Activated B cell treated with CpG ODN at 0.5 μM for 24 hours (primary cell): ENCODE measurements at regions of chr19 and their contacts with region 1.

Region 1: GRCh38 chr19:6110360-6110977 is at the start of gene RFX2:
- DNase-seq: peak; percentile 99
- ATAC-seq: peak; percentile 98
- H3K4me3 Mint-ChIP-seq: peak within 1 kb of the TSS; percentile 87
- H3K27ac Mint-ChIP-seq: peak within 1 kb of the TSS; percentile 77
- H3K4me1 Mint-ChIP-seq: peaks cover 22% of the 10 kb centered on the region
- H3K27me3 Mint-ChIP-seq: peaks cover 12% of the 10 kb centered on the region
- CTCF ChIP-seq: no peak
- total RNA-seq, gene RFX2: 5.2 and 7.0 TPM in 2 replicates

Region 2: DNA sequence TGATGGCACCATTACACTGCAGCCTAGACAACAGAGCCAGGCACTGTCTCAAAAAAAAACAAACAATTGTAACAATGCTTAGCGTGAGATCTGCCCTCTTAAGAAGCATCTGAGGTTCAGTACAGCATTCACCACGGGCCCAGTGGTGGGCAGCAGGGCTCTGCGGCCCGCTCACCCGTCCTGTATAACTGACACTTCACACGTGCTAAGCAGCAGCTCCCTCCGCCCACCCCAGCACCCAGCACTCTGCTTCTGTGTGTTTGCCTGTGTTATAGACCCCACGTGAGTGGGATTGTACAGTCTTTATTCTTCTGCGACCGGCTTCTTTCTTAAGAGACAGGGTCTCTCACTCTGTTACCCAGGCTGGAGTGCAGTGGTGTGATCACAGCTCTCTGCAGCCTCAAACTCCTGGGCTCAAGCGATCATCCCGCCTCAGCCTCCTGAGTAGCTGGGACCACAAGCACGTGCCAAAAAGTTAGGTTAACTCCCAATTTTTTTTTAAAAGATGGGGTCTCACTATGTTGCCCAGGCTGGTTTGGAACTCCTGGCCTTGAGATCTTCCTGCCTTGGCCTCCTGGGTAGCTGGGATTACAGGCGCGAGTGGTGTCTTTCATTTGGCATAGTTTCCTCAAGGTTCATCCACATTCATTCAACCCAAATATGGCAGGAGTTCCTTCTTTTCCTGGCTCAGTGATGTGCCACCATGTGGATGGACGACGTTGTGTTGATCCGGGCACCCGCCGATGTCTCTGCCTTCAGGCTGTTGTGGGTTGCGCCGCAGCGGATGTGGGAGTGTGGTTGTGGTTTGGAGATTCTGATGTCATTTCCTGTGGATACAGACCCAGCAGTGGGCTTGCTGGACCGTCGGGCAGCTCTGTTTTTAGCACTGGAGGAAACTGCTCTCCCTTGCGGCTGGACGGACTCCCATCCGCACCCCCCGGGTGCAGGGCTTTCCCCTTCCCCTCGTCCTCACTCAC is 971.6 kb before region 1 on chr19:
- CTCF ChIA-PET with region 1: no interaction called
- POLR2A ChIA-PET with region 1: no interaction called
- intact Hi-C with region 1: loop called (anchors 10 kb)
- DNase-seq: peak; percentile 73
- ATAC-seq: peak; percentile 64
- H3K4me3 Mint-ChIP-seq: peak overlapping the region; percentile 70
- H3K27ac Mint-ChIP-seq: peak overlapping the region; percentile 85
- H3K4me1 Mint-ChIP-seq: peaks cover 86% of the 10 kb centered on the region
- H3K27me3 Mint-ChIP-seq: no peaks in the 10 kb centered on the region
- CTCF ChIP-seq: no peak

Region 3: GRCh38 chr19:5977785-5978605 is 132.5 kb before region 1 on chr19 and contains the start of gene RANBP3:
- CTCF ChIA-PET with region 1: no interaction called
- POLR2A ChIA-PET with region 1: no interaction called
- intact Hi-C with region 1: loop called (anchors 1 kb)
- DNase-seq: peak; percentile 97
- ATAC-seq: peak; percentile 91
- H3K4me3 Mint-ChIP-seq: peak within 1 kb of the TSS; percentile 91
- H3K27ac Mint-ChIP-seq: peak within 1 kb of the TSS; percentile 83
- H3K4me1 Mint-ChIP-seq: peaks cover 52% of the 10 kb centered on the region
- H3K27me3 Mint-ChIP-seq: no peaks in the 10 kb centered on the region
- CTCF ChIP-seq: no peak
- total RNA-seq, gene RANBP3: 77.0 and 98.5 TPM in 2 replicates

Region 4: GRCh38 chr19:5993648-5994358 is 116.7 kb before region 1 on chr19:
- CTCF ChIA-PET with region 1: no interaction called
- POLR2A ChIA-PET with region 1: interaction called, 4 read pairs
- intact Hi-C with region 1: loop called (anchors 5 kb)
- DNase-seq: no peak
- ATAC-seq: no peak
- H3K4me3 Mint-ChIP-seq: no peak overlapping the region
- H3K27ac Mint-ChIP-seq: peak overlapping the region; percentile 27
- H3K4me1 Mint-ChIP-seq: peaks cover 22% of the 10 kb centered on the region
- H3K27me3 Mint-ChIP-seq: no peaks in the 10 kb centered on the region
- CTCF ChIP-seq: no peak

Region 5: GRCh38 chr19:6076675-6077463 is 33.6 kb before region 1 on chr19:
- CTCF ChIA-PET with region 1: no interaction called
- POLR2A ChIA-PET with region 1: interaction called, 10 read pairs
- intact Hi-C with region 1: no loop called
- DNase-seq: no peak
- ATAC-seq: no peak
- H3K4me3 Mint-ChIP-seq: no peak overlapping the region
- H3K27ac Mint-ChIP-seq: no peak overlapping the region
- H3K4me1 Mint-ChIP-seq: peaks cover 8% of the 10 kb centered on the region
- H3K27me3 Mint-ChIP-seq: no peaks in the 10 kb centered on the region
- CTCF ChIP-seq: no peak

Region 6: GRCh38 chr19:6087074-6087571 is 23.3 kb before region 1 on chr19:
- CTCF ChIA-PET with region 1: interaction called, 3 read pairs
- POLR2A ChIA-PET with region 1: interaction called, 15 read pairs
- intact Hi-C with region 1: loop called (anchors 1 kb)
- DNase-seq: no peak
- ATAC-seq: peak; percentile 49
- H3K4me3 Mint-ChIP-seq: peak overlapping the region; percentile 73
- H3K27ac Mint-ChIP-seq: peak overlapping the region; percentile 91
- H3K4me1 Mint-ChIP-seq: peaks cover 32% of the 10 kb centered on the region
- H3K27me3 Mint-ChIP-seq: no peaks in the 10 kb centered on the region
- CTCF ChIP-seq: no peak

Region 7: DNA sequence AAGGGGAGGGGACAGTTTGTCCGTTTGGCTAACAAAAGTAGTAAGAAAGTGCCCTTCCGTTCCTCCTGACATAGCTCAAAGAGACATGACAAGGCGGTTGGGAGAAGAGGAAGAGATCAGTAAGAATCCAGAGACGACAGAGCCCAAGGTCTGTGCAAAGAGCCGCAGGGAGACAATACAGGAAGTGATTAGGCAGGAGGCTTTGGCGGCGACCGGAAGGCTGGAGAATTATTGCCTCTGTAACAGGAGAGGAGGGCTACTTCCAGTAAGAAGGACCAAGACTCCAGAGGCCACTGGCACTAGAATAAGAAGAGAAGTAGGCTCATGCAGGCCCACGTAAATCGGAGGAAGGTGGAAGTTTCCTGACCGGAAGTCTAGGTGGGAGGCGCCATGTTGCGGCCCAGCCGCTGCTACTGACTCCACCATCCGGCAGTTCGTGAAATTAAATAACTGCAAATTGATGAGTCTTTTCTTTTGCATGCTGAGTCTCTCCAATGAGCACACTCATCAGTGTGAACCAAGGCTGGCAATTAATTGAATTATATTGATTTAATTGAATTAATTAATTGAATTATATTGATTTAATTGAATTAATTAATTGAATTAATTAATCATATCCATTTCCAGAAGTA is 10.1 kb before region 1 on chr19:
- CTCF ChIA-PET with region 1: no interaction called
- POLR2A ChIA-PET with region 1: interaction called, 5 read pairs
- intact Hi-C with region 1: loop called (anchors 1 kb)
- DNase-seq: peak; percentile 37
- ATAC-seq: peak; percentile 87
- H3K4me3 Mint-ChIP-seq: peak overlapping the region; percentile 84
- H3K27ac Mint-ChIP-seq: peak overlapping the region; percentile 84
- H3K4me1 Mint-ChIP-seq: peaks cover 17% of the 10 kb centered on the region
- H3K27me3 Mint-ChIP-seq: no peaks in the 10 kb centered on the region
- CTCF ChIP-seq: no peak

Region 8: GRCh38 chr19:6133231-6133630 is 22.8 kb after region 1 on chr19:
- CTCF ChIA-PET with region 1: no interaction called
- POLR2A ChIA-PET with region 1: no interaction called
- intact Hi-C with region 1: no loop called
- DNase-seq: no peak
- ATAC-seq: no peak
- H3K4me3 Mint-ChIP-seq: no peak overlapping the region
- H3K27ac Mint-ChIP-seq: no peak overlapping the region
- H3K4me1 Mint-ChIP-seq: peaks cover 4% of the 10 kb centered on the region
- H3K27me3 Mint-ChIP-seq: no peaks in the 10 kb centered on the region
- CTCF ChIP-seq: no peak

Region 9: DNA sequence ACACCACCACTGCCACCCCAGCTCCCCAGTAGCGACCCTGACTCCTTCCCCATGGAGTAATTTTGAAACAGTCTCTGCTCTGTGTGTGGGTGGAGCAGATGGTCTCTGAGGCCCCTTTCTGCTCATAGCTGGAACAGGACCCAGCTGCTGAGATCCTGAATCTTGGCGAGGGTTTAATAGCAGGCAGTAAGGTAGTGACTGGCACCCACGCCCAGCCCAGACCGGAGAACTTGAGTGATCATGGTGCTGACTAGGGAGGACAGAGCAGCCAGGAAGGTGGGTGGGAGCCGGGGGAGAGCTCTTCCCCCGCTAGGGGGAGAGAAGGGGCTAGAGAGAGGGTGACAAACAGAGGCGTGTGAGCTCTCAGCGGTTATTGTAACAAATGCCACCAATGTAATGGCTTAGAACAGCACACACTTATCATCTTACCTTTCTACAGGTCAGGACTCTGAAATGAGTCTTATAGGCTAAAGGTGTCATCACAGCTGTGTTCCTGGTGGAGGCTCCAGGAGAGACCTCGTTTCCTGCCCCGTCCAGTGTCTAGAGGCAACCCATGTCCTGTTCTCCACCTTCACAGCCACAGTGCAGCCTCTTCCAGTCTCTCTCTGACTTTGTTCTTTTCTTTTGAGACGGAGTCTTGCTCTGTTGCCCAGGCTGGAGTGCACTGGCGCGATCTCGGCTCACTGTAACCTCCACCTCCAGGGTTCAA is 230.2 kb after region 1 on chr19:
- CTCF ChIA-PET with region 1: no interaction called
- POLR2A ChIA-PET with region 1: no interaction called
- intact Hi-C with region 1: no loop called
- DNase-seq: no peak
- ATAC-seq: no peak
- H3K4me3 Mint-ChIP-seq: no peak overlapping the region
- H3K27ac Mint-ChIP-seq: no peak overlapping the region
- H3K4me1 Mint-ChIP-seq: peaks cover 5% of the 10 kb centered on the region
- H3K27me3 Mint-ChIP-seq: no peaks in the 10 kb centered on the region
- CTCF ChIP-seq: no peak

Region 10: DNA sequence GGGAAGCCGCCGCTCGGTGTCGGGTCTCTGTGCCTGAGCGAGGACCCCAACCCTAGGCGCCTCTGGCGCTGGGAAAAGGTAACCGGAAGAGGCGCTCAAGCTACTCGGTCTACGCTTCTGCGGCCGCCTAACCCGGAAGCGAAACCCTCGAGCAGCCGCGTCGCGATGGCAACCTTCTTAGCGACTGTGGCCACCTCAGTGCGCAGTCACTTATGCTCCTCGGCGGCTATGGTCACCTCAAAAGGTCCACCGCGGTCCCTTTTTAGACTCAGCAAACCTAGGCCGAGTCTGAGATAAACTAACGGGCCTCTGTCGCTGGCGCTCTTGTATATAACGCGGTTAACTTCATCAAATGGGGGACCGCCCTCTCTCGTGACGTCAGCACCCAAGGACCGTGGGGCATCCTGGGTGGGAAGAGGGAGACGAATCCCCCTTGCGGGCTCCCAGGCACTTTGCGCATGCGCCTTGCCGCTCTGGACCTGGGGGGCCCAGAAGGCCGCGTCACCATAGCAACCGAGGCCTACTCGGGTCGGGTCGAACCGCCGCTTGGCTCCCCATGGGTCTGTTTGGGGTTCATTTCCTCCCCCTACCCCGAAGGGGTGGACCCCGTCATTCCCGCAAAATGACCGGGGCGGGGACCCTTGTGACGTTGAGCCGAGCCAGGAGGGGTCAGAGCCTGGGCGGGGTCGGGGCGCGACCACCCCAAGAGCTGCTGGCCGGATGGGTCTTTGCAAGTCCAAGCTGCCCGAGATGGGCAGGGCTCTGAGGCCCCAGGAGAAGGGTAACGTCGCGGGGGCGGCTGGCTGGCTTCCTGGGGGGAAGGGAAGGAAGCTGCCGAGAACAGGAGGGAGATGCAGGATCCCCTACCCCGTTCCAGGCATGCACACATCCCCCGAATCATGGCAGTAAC is 282.9 kb after region 1 on chr19 and contains the start of gene GTF2F1:
- CTCF ChIA-PET with region 1: no interaction called
- POLR2A ChIA-PET with region 1: no interaction called
- intact Hi-C with region 1: no loop called
- DNase-seq: peak; percentile 92
- ATAC-seq: peak; percentile 85
- H3K4me3 Mint-ChIP-seq: peak within 1 kb of the TSS; percentile 94
- H3K27ac Mint-ChIP-seq: peak within 1 kb of the TSS; percentile 94
- H3K4me1 Mint-ChIP-seq: peaks cover 23% of the 10 kb centered on the region
- H3K27me3 Mint-ChIP-seq: no peaks in the 10 kb centered on the region
- CTCF ChIP-seq: no peak
- total RNA-seq, gene GTF2F1: 67.6 and 68.1 TPM in 2 replicates